Ovary (tissue), 10 donors: ENCODE measurements at regions of chr3 and their contacts with region 1.

Region 1: GRCh38 chr3:52238761-52239701 is at the start of gene TWF2:
- DNase-seq: peak; percentile 82 to 89 (median 84)
- H3K4me3 ChIP-seq: peak within 1 kb of the TSS; percentile 87
- H3K27ac ChIP-seq: peak within 1 kb of the TSS; percentile 75 to 91
- H3K4me1 ChIP-seq: peaks cover 16% of the 10 kb centered on the region
- H3K27me3 ChIP-seq: no peaks in the 10 kb centered on the region
- CTCF ChIP-seq: peak; percentile 26 to 44 (median 34)
- EP300 ChIP-seq: no peak
- POLR2A ChIP-seq: peak; percentile 57
- total RNA-seq, gene TWF2: 34.0 to 56.3 (median 43.3) TPM

Region 2: GRCh38 chr3:52014613-52015012 is 224.4 kb before region 1 on chr3:
- intact Hi-C with region 1: no loop called
- DNase-seq: no peak
- H3K4me3 ChIP-seq: no peak overlapping the region
- H3K27ac ChIP-seq: no peak overlapping the region
- H3K4me1 ChIP-seq: no peaks in the 10 kb centered on the region
- H3K27me3 ChIP-seq: no peaks in the 10 kb centered on the region
- CTCF ChIP-seq: no peak
- EP300 ChIP-seq: no peak
- POLR2A ChIP-seq: no peak

Region 3: DNA sequence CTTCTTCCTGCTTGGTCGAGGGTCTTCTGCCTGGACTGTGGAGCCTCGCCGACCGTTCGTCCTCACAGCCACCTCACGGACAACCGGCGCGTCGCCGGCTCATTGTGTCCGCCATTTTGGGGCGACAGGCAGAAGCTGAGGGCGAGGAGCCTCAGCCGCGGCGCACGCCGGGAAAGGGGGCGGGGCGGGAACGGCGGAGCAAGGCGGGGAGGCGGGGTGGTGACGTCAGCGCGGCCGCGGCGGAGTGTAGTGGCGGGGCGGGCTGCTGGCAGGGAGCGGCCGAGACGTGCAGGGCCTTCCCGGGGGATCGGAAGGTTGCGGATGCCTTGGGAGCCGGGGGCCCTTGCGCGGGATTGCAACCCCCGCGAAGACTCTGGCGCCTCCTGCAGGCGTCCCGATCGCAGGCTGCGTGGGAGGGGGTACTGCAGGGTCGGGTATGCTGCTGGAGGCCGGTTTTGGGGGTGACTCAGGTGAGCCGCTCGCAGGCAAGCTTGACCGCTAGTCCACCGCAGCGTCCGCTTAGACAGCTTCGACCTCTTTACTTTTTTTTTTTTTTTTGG is 39.6 kb after region 1 on chr3 and contains the start of gene WDR82:
- intact Hi-C with region 1: loop called in 2 of 4 experiments (anchors 5 kb)
- DNase-seq: peak; percentile 98 to 99 (median 98)
- H3K4me3 ChIP-seq: peak within 1 kb of the TSS; percentile 51
- H3K27ac ChIP-seq: peak within 1 kb of the TSS; percentile 93
- H3K4me1 ChIP-seq: peaks cover 21% of the 10 kb centered on the region
- H3K27me3 ChIP-seq: no peaks in the 10 kb centered on the region
- CTCF ChIP-seq: peak; percentile 40 to 54 (median 49)
- EP300 ChIP-seq: no peak
- POLR2A ChIP-seq: peak; percentile 83
- total RNA-seq, gene WDR82: 36.4 to 104 (median 95.2) TPM

Region 4: DNA sequence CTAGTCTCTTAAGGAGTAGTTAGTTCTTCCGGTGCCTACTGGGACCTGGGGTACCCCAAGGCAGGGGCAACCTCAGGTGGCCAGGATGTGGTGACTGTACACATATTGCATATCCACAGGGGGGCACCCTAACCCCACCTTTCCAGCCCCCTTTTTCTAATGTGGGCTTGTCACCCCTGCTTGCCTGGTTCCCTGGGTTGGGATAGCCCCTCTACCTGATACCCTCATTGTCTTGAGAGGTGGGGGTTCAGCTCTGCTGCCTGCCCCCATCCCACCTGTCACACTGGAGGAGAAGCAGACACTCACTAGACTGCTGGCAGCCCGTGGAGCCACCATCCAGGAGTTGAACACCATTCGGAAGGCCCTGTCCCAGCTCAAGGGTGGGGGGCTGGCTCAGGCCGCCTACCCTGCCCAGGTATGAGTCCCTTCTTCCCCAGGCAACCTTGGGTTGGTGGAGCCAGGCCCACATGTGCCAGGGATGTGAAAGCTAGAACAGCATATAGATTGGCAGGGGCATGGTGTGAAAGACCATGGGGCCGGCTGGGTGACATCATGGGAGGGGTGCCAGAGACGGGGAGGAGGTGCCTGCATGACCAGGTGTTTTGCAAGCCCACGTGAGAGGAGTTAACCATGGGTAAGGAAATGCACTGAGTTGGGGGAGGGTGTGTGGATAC is 52.6 kb after region 1 on chr3:
- intact Hi-C with region 1: loop called in 1 of 4 experiments (anchors 5 kb)
- DNase-seq: peak in 4 of 5 donors; percentile 43 to 63 (median 58)
- H3K4me3 ChIP-seq: no peak overlapping the region
- H3K27ac ChIP-seq: no peak overlapping the region
- H3K4me1 ChIP-seq: peaks cover 2% of the 10 kb centered on the region
- H3K27me3 ChIP-seq: no peaks in the 10 kb centered on the region
- CTCF ChIP-seq: peak in 1 of 3 donors; percentile 39
- EP300 ChIP-seq: no peak
- POLR2A ChIP-seq: no peak